ENCODE measurements at regions of chr9 and their contacts with region 1.

Region 1: GRCh38 chr9:76704593-76705204 is 59.5 kb upstream of the PCA3 start:
- DNase-seq: peak in 1 of 2 donors; percentile 79
- ATAC-seq: peak in 2 of 3 donors; percentile 46 to 52
- H3K4me3 ChIP-seq: no peak overlapping the region
- H3K4me3 Mint-ChIP-seq: no peak overlapping the region
- H3K27ac ChIP-seq: no peak overlapping the region
- H3K27ac Mint-ChIP-seq: no peak overlapping the region
- H3K4me1 ChIP-seq: no peaks in the 10 kb centered on the region
- H3K4me1 Mint-ChIP-seq: peaks cover 5 to 9% of the 10 kb centered on the region in 2 donors
- H3K27me3 ChIP-seq: no peaks in the 10 kb centered on the region
- H3K27me3 Mint-ChIP-seq: peaks cover 26 to 44% of the 10 kb centered on the region in 2 donors
- CTCF ChIP-seq: peak; percentile 89

Region 2: DNA sequence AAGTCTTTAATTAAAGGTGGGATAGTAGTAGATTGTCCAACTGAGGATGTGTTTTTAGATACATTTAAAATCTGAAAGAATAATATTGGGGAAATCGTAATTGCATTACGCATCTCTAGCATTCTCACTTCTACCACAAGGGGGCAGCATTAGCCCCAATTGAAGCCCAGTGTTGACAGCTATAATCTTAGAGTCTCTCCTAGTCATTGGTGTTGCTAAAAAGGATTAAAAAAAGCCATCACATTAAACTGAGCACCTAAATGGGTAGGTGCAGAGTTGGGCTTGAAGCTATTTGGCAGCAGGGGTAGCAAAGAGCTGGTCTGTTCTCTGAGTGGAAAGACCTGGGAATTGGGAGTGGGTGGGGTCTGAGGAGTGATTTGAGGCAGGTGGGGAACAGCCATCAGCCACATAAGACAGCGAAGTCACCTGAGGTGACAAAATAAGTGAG is 1439.2 kb before region 1 on chr9:
- intact Hi-C with region 1: loop called (anchors 5 kb)
- DNase-seq: peak in 1 of 2 donors; percentile 72
- ATAC-seq: peak; percentile 68 to 75 (median 71)
- H3K4me3 ChIP-seq: no peak overlapping the region
- H3K4me3 Mint-ChIP-seq: no peak overlapping the region
- H3K27ac ChIP-seq: no peak overlapping the region
- H3K27ac Mint-ChIP-seq: peak overlapping the region in 1 of 2 donors; percentile 36
- H3K4me1 ChIP-seq: no peaks in the 10 kb centered on the region
- H3K4me1 Mint-ChIP-seq: peaks cover 4 to 7% of the 10 kb centered on the region in 2 donors
- H3K27me3 ChIP-seq: no peaks in the 10 kb centered on the region
- H3K27me3 Mint-ChIP-seq: no peaks in the 10 kb centered on the region
- CTCF ChIP-seq: peak; percentile 95

Region 3: DNA sequence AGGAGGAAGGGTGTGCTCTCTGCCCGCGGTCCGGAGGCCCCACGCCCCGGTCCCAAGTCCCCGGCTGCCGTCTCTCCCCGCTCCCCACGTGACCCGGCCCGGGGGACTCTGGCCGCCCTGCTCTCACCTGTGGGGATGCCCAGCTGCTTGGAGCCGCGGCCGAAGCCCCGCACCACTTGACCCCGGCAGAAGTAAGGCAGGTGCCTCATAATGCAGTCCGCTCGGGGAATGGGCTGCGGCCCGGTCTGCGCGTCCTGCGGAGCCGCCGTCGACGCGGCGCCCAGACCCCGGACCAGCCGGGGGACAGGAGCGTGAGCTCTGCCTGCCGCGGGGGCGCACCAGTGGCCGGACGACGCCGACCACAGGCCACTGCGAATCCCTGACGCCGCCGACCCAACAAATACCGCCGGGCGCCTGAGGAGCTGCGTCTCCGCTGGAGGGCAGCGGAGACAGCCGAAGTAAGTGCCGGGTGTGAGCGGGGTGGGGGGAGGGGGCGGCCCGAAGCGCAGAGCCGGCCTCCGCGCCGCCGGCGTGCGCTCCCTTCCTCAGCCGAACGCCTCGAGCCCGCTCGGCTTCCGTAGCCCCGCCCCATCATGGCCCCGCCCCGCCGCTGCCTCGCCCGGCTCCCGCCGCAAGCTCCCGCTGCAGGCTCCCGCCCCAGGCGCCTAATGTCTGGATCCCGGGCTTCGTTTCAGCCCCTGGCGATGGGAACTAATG is 310.6 kb before region 1 on chr9 and contains the start of gene RFK:
- intact Hi-C with region 1: loop called (anchors 2 kb)
- DNase-seq: peak; percentile 94 to 95
- ATAC-seq: peak; percentile 88 to 98 (median 91)
- H3K4me3 ChIP-seq: peak within 1 kb of the TSS; percentile 99
- H3K4me3 Mint-ChIP-seq: peak within 1 kb of the TSS; percentile 100
- H3K27ac ChIP-seq: peak within 1 kb of the TSS; percentile 90
- H3K27ac Mint-ChIP-seq: peak within 1 kb of the TSS; percentile 98 to 99
- H3K4me1 ChIP-seq: peaks cover 15% of the 10 kb centered on the region
- H3K4me1 Mint-ChIP-seq: peaks cover 12% of the 10 kb centered on the region in 2 donors
- H3K27me3 ChIP-seq: no peaks in the 10 kb centered on the region
- H3K27me3 Mint-ChIP-seq: no peaks in the 10 kb centered on the region
- CTCF ChIP-seq: peak; percentile 41
- total RNA-seq, gene RFK: 8.7 to 11.5 (median 9.2) TPM

Region 4: DNA sequence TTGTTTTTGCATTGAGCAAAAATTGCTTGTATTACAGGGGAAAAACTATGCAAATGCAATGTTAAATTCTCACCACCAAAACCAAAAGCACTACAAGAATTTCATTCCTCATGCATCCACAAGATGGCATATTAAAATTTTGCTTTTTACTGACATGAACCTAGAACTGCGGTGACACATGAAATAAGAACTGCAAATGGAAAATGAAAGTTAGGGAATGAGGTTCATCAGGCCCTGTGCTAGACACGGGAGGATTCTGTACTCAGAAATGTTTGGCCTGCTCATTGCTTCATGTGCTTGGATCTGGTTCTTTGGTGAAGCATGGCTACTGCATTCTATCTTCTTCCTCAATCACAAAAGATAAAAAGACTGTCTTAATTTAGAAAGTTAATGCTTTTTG is 301.3 kb before region 1 on chr9:
- intact Hi-C with region 1: loop called (anchors 1 kb)
- DNase-seq: peak in 1 of 2 donors; percentile 75
- ATAC-seq: peak; percentile 76 to 87 (median 80)
- H3K4me3 ChIP-seq: no peak overlapping the region
- H3K4me3 Mint-ChIP-seq: peak overlapping the region; percentile 67
- H3K27ac ChIP-seq: no peak overlapping the region
- H3K27ac Mint-ChIP-seq: peak overlapping the region; percentile 53 to 61
- H3K4me1 ChIP-seq: no peaks in the 10 kb centered on the region
- H3K4me1 Mint-ChIP-seq: peaks cover 6 to 8% of the 10 kb centered on the region in 2 donors
- H3K27me3 ChIP-seq: no peaks in the 10 kb centered on the region
- H3K27me3 Mint-ChIP-seq: peaks cover 0 to 6% of the 10 kb centered on the region in 2 donors
- CTCF ChIP-seq: peak; percentile 52

Region 5: DNA sequence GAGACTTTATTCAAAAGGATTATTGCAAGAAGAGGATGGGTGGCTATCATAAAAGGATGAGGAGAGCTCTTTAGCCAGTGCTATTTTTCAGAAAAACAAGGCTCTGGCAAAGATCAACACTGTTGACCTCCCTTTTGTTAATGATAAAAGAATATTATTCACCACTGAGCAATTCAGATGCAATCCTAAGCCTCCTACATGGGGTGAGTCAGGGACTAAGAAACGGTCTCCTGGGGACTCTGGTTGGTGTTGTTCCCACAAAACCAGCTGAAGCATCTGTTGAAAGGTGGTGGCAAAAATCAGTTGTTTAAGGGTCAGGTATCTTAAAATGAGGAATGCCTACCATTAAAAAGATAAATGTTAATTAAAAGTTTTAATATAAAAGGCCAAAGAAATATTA is 253.5 kb before region 1 on chr9:
- intact Hi-C with region 1: loop called (anchors 1 kb)
- DNase-seq: no peak
- ATAC-seq: no peak
- H3K4me3 ChIP-seq: no peak overlapping the region
- H3K4me3 Mint-ChIP-seq: no peak overlapping the region
- H3K27ac ChIP-seq: no peak overlapping the region
- H3K27ac Mint-ChIP-seq: no peak overlapping the region
- H3K4me1 ChIP-seq: peaks cover 6% of the 10 kb centered on the region
- H3K4me1 Mint-ChIP-seq: peaks cover 7% of the 10 kb centered on the region in 2 donors
- H3K27me3 ChIP-seq: no peaks in the 10 kb centered on the region
- H3K27me3 Mint-ChIP-seq: no peaks in the 10 kb centered on the region
- CTCF ChIP-seq: no peak

Region 6: GRCh38 chr9:76658535-76659231 is 46.0 kb before region 1 on chr9:
- intact Hi-C with region 1: loop called (anchors 5 kb)
- DNase-seq: peak in 1 of 2 donors; percentile 69
- ATAC-seq: peak; percentile 70 to 82 (median 75)
- H3K4me3 ChIP-seq: no peak overlapping the region
- H3K4me3 Mint-ChIP-seq: no peak overlapping the region
- H3K27ac ChIP-seq: no peak overlapping the region
- H3K27ac Mint-ChIP-seq: peak overlapping the region; percentile 5 to 85
- H3K4me1 ChIP-seq: peaks cover 9% of the 10 kb centered on the region
- H3K4me1 Mint-ChIP-seq: peaks cover 56 to 63% of the 10 kb centered on the region in 2 donors
- H3K27me3 ChIP-seq: no peaks in the 10 kb centered on the region
- H3K27me3 Mint-ChIP-seq: no peaks in the 10 kb centered on the region
- CTCF ChIP-seq: peak; percentile 70

Region 7: DNA sequence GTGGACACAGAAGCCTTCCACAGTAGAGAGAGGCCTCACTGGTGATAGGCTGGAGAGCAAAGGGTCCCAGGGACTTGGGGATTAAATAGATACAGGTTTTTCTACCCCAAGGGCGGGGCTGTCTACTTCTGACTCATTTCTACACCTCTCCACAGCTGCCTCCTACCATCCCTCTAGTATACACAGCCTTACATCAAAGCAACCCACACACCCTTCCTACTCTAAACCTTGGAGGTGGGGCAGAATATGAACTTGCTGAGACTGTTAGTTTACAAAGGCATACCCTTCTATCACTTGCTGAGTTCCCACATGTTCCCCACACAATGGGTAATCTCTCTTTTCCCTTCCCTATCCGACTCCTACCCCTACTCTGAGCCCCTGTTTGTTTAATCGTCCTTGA is 39.6 kb after region 1 on chr9:
- intact Hi-C with region 1: no loop called
- DNase-seq: no peak
- ATAC-seq: no peak
- H3K4me3 ChIP-seq: no peak overlapping the region
- H3K4me3 Mint-ChIP-seq: no peak overlapping the region
- H3K27ac ChIP-seq: no peak overlapping the region
- H3K27ac Mint-ChIP-seq: no peak overlapping the region
- H3K4me1 ChIP-seq: no peaks in the 10 kb centered on the region
- H3K4me1 Mint-ChIP-seq: no peaks in the 10 kb centered on the region
- H3K27me3 ChIP-seq: no peaks in the 10 kb centered on the region
- H3K27me3 Mint-ChIP-seq: peaks cover 12 to 28% of the 10 kb centered on the region in 2 donors
- CTCF ChIP-seq: no peak